Sciatic nerve (tissue), 2 donors: ENCODE measurements at regions of chr5 and their contacts with region 1.

Region 1: DNA sequence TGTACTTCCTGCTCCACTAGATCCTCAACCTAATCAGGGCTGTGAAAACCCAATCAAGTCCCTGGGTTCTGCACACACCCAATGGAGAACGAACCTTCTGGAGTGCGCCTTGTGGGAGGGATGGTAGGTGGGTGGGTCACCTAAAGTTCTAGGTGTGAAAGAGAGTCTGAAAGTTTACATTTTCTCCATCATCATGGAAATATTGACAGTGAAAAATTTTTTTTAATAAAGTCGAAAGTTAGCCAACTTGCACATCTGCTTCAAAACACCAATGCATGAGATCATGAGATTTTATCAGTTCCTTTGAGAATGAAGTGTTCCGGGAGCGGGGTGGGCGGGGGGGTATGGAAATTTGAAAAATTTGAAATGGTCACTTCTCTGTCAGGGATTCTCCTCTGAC is 21.7 kb downstream of the TAF11L14 start:
- DNase-seq: no peak
- ATAC-seq: no peak

Region 2: GRCh38 chr5:17625686-17626085 is 30.2 kb before region 1 on chr5:
- intact Hi-C with region 1: loop called (anchors 2 kb)
- DNase-seq: no peak
- ATAC-seq: no peak